ENCODE measurements at regions of chr17 and their contacts with region 1.

Region 1: DNA sequence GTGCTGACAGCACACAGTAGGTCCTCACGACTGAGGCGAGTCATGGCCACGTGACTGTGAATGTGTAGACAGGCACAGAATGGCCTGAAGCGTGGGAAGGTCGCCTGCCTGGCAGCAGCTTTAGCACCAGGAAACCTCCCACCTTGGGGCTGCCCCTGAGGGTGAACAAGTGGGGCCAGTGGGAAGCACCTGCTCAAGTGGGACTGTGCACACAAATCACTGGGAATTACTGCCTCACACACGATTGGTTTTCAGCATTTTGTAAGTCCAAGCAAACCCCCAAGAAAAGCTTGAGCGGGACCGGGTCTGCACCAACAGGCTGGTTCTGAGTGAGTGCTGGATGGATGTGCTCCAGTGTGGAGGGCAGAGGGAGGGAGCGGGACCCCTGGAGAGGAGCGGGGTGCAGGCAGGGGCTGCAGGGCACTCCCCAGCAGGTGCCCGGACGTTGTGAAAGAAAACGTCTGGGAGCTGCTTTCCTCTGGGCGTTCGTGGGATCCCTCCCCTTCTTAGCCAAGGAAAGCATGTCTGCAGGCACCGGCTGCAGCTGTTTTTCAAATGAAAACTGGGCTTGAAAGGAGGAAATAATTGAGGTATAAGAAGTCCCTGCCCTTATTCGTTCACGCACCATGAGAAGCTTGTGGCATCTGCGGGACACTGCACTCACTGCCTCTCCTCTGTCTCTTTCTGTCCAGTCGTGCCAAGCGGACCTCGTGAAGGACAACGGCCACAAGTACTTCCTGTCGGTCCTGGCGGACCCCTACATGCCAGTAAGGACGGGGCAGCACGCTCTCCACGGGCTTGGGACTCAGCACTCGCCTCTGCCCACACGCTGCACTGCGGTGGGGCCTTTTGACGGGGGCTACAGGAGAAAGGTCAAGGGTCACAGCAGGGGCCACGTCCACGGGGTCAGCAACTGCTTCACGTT is 111.7 kb upstream of the CHMP6 start:
- DNase-seq: no peak
- CTCF ChIP-seq: no peak

Region 2: GRCh38 chr17:80307994-80308691 is 571.8 kb before region 1 on chr17:
- CTCF ChIA-PET with region 1: no interaction called
- POLR2A ChIA-PET with region 1: no interaction called
- DNase-seq: no peak
- CTCF ChIP-seq: no peak

Region 3: GRCh38 chr17:80899402-80900268 is 19.6 kb after region 1 on chr17:
- CTCF ChIA-PET with region 1: interaction called, 15 read pairs
- POLR2A ChIA-PET with region 1: no interaction called
- DNase-seq: peak; percentile 60
- CTCF ChIP-seq: peak; percentile 46